PC-9 (cell line): ENCODE measurements at regions of chr3 and their contacts with region 1.

Region 1: DNA sequence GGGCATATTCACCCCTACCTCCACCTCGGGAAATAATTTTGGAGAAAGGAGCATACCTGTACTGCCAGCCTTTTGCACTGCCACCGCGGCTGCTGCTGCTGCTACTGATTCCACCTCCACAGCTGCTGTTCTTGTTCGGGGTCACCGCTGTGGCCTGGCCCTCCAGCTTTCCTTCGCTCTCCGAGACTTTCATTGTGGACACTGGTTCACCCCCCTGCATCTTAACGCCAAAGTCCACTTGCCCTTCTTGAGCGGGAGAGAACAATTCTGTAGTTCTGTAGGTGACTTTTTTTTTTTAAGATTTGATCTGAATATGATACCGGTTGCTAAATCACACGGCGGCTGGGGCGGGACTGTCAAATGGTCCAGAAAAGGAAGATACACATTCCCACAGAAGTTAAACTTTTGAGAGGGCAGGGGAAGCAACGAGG is 701 bp downstream of the OSBPL11 start:
- DNase-seq: peak in 1 of 2 experiments; percentile 42
- H3K4me3 ChIP-seq: peak overlapping the region; percentile 83
- H3K27ac ChIP-seq: peak overlapping the region; percentile 85
- H3K4me1 ChIP-seq: peaks cover 38% of the 10 kb centered on the region; the same call in 1 of the 2 replicates
- H3K27me3 ChIP-seq: no peaks in the 10 kb centered on the region
- CTCF ChIP-seq: no peak

Region 2: DNA sequence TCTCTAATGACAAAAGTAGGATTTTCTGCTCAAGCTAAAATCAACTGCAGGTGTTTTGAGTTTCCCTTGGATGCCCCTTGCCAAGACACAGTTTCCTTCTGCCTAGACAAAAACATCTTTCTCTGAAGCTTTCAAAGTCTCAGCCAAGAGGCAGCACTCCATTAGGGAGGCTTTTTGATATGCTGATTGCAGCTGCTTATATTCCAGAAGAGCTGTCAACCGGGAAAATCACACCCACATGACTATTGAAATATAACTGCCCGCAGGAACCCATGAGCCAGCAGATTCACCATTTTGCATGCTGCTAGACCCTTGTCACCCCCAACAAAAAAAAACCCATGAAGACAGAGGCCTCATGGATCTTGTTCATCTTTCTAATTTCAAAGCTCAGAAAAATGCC is 191.9 kb before region 1 on chr3:
- CTCF ChIA-PET with region 1: no interaction called
- POLR2A ChIA-PET with region 1: interaction called, 18 read pairs
- intact Hi-C with region 1: no loop called
- DNase-seq: no peak
- H3K4me3 ChIP-seq: no peak overlapping the region
- H3K27ac ChIP-seq: no peak overlapping the region
- H3K4me1 ChIP-seq: no peaks in the 10 kb centered on the region
- H3K27me3 ChIP-seq: 0 out of 2 replicates have a peak, but pooled peaks cover 5% of the 10 kb centered on the region
- CTCF ChIP-seq: no peak

Region 3: DNA sequence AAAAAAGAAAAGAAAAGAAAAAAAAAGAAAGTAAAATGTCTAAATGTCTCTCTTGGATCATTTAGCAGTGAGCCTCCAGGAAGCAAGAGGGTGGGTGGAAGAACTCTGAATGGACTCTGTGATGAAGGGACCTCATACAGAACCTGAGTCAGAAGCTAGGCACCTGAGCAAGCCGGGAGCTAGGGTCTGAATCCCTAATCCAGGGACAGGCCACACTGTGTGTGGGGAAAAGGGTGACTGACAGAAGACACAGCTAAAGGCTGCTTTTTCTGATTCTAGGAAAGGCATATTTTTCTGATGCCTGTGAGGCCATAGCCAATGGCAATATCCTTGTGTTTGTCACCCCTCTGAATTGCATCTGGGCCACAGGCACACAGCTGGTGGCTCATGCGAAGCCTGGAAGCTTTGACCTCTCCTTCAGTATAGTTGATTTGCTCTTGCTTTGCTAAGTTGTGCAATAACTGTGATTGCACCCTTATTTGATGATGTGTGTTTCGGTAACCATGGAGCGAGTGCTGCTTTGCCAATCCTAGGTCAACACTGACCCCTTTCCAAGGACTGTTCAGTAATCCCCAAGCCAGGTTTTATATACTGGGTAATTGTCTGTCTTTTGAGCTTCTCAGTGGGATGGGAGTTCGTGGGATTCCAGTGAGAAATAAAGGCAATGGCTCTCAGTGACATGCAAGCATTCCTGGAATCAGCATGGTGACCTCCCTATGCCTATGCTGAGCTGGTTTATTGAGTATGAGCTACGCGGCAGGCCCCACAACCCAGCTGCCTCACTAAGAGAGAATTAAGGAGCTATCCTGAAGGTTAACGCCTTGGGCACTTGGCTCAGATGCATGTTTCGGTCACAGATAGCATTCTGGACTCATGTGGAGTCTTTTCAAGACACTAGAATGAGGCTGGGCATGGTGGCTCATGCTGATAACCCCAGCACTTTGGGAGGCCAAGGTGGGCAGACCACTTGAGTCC is 49.7 kb after region 1 on chr3:
- CTCF ChIA-PET with region 1: interaction called, 12 read pairs
- POLR2A ChIA-PET with region 1: interaction called, 13 read pairs
- intact Hi-C with region 1: loop called (anchors 1 kb)
- DNase-seq: peak in 1 of 2 experiments; percentile 38
- H3K4me3 ChIP-seq: no peak overlapping the region
- H3K27ac ChIP-seq: no peak overlapping the region
- H3K4me1 ChIP-seq: peaks cover 28% of the 10 kb centered on the region
- H3K27me3 ChIP-seq: no peaks in the 10 kb centered on the region
- CTCF ChIP-seq: no peak

Region 4: DNA sequence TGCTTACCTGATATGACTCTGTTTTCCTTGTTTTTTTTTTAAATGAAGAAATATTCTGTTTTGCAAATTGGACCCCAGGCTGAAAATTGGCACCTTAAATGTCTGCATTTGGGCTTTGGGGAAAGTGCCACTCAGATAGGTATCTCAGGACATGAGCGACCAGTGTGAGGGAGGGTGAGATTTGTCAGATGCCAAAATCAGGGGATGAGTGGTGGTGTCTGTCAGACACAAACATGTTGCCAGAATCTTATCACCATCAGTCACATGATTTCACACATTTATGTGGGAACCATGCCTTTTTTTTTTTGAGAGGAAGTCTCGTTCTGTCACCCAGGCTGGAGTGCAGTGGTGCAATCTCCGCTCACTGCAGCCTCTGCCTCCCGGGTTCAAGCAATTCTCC is 76.3 kb after region 1 on chr3:
- CTCF ChIA-PET with region 1: no interaction called
- POLR2A ChIA-PET with region 1: interaction called, 15 read pairs
- intact Hi-C with region 1: no loop called
- DNase-seq: no peak
- H3K4me3 ChIP-seq: no peak overlapping the region
- H3K27ac ChIP-seq: no peak overlapping the region
- H3K4me1 ChIP-seq: no peaks in the 10 kb centered on the region
- H3K27me3 ChIP-seq: no peaks in the 10 kb centered on the region
- CTCF ChIP-seq: no peak

Region 5: DNA sequence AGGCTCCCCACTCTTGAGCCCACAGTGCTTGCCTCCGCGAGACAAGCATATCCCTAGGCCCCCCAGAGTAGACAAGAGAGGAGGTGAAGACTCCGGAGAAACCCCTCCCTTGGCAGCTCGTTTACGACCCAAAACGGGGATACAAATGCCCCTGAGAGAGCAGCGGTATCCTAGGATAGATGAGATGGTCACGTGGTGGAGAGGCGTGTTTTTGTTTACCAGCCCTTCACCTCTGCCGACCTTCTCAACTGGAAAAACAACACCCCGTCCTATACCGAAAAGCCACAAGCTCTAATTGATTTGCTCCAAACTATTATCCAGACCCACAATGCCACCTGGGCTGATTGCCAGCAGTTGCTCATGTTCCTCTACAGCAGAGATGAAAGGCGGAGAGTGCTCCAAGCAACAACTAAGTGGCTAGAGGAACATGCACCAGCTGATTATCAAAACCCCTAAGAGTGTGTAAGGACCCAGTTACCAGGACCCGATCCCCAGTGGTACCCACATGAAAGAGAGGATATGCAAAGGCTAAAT is 100.2 kb after region 1 on chr3:
- CTCF ChIA-PET with region 1: no interaction called
- POLR2A ChIA-PET with region 1: no interaction called
- intact Hi-C with region 1: loop called (anchors 5 kb)
- DNase-seq: no peak
- H3K4me3 ChIP-seq: no peak overlapping the region
- H3K27ac ChIP-seq: no peak overlapping the region
- H3K4me1 ChIP-seq: peaks cover 12% of the 10 kb centered on the region
- H3K27me3 ChIP-seq: no peaks in the 10 kb centered on the region
- CTCF ChIP-seq: no peak

Region 6: GRCh38 chr3:126160243-126161210 is 565.9 kb after region 1 on chr3:
- CTCF ChIA-PET with region 1: interaction called, 15 read pairs
- POLR2A ChIA-PET with region 1: no interaction called
- intact Hi-C with region 1: no loop called
- DNase-seq: no peak
- H3K4me3 ChIP-seq: no peak overlapping the region
- H3K27ac ChIP-seq: no peak overlapping the region
- H3K4me1 ChIP-seq: peaks cover 2% of the 10 kb centered on the region; the same call in 1 of the 2 replicates
- H3K27me3 ChIP-seq: no peaks in the 10 kb centered on the region
- CTCF ChIP-seq: no peak